ENCODE measurements at regions of chr19 and their contacts with region 1.

Region 1: GRCh38 chr19:49502866-49503581 is 6.8 kb downstream of the RPS11 start:
- DNase-seq: peak; percentile 65 to 84 (median 76)
- H3K4me3 ChIP-seq: no peak overlapping the region
- H3K27ac ChIP-seq: no peak overlapping the region
- H3K4me1 ChIP-seq: peaks cover 7 to 47% (median 33%) of the 10 kb centered on the region in 4 experiments
- H3K27me3 ChIP-seq: no peaks in the 10 kb centered on the region

Region 2: DNA sequence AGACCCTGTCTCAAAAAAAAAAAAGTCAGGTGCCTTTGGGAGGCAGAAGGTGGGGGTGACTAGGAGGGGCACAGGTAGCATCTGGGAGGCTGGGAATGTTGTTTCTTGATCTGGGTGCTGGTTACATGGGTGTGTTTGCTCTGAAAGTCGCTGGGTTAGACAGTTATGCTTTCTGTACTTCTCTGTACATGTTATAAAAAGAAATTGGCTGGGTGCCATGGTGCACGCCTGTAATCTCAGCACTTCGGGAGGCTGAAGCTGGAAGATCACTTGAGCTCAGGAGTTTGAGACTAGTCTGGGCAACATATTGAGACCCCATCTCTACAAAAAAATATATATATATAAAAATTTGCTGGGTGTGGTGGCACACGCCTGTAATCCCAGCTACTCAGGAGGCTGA is 62.2 kb after region 1 on chr19:
- CTCF ChIA-PET with region 1: interaction called, 33 read pairs
- POLR2A ChIA-PET with region 1: no interaction called
- DNase-seq: no peak
- H3K4me3 ChIP-seq: no peak overlapping the region
- H3K27ac ChIP-seq: no peak overlapping the region
- H3K4me1 ChIP-seq: peaks cover 0 to 18% (median 9%) of the 10 kb centered on the region in 4 experiments
- H3K27me3 ChIP-seq: no peaks in the 10 kb centered on the region